Panc1 (cell line): ENCODE measurements at regions of chr1 and their contacts with region 1.

Region 1: DNA sequence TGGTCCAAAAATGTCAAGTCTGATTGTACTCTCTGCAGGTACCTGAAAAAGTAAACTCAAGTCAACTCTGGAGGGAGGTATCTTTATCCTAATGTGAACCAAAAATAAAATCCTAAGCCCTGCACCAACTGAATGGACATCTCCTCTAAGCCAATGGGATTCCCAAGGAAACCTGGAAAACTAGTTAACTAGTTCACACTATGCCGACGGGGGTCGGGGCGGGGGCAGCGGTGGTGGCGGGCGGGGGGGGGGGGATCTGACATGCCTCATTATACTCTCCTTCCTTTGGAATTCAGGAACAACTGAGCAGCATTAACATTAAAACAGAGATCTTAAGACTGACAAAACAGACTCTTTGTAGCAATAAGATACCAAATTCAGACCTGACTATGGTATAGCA is 452.6 kb upstream of the CAMK1G start:
- DNase-seq: no peak
- ATAC-seq: no peak
- H3K4me3 ChIP-seq: no peak overlapping the region
- H3K27ac ChIP-seq: no peak overlapping the region
- H3K4me1 ChIP-seq: no peaks in the 10 kb centered on the region
- H3K27me3 ChIP-seq: no peaks in the 10 kb centered on the region
- CTCF ChIP-seq: no peak

Region 2: DNA sequence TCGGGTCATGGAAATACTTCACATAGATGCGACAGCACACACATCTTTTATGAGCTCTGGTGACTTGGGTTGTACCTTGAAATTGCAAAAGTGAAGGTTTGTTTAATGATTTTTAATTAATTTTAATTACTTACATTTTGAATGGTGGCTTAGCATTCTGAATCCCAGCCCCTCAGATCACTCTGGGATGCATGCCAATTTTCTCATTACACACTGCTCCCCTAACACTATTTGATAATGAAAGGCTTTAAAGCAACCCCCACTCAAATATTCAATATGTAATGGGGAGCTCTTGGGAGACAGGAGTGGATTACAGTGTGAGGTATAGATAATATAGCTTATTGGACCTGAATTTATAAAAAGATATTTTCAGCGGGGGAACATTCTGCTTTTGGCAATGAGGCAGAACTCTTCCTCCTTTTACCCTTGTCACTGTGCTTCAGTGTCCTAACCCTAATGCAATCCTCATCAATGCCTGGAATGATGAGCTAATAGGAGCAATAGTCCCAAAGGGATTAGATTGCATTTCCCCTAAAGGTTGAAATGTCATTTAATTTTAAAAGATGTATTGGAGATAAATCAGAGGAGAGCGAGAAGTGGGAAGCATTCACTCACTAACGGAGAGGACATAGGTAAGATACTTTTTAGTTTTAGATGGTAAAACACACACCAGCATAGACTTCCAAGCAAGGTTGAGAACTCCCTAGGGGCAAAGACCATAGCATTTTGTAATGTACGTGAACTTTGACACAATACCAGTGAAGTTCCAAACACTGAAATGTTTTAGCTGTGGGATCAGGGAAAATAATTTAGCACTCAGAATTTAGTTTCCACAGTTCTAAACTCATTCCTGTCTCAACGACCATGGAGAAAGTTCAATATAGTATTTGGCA is 502.6 kb before region 1 on chr1:
- CTCF ChIA-PET with region 1: no interaction called
- POLR2A ChIA-PET with region 1: no interaction called
- in situ Hi-C with region 1: no loop called
- intact Hi-C with region 1: no loop called
- DNase-seq: no peak
- ATAC-seq: no peak
- H3K4me3 ChIP-seq: no peak overlapping the region
- H3K27ac ChIP-seq: no peak overlapping the region
- H3K4me1 ChIP-seq: no peaks in the 10 kb centered on the region
- H3K27me3 ChIP-seq: no peaks in the 10 kb centered on the region
- CTCF ChIP-seq: no peak

Region 3: DNA sequence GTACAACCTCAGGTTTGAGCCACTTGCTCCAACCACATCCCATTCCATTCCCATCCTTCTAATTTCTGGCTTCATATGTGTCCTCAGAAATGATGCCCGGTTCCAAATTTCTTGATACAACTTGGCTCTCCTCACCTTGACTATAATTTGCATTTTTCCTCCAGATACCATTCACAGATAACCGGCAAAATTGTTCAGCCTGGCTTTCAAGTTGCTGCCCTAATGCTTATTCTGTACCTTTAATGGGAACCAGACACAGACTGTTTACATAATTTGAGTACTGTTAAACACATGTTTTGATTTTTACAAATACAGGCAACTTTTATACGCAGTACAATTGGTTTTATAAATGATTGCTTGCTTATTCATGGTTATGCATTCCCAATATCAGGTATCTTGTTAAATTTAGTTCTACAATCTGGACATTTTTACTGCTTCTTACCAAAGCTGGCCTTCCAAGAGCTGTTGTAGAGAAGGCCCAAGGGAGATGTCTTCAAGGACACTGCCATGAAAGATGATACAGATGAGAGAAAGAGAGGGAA is 196.8 kb before region 1 on chr1:
- CTCF ChIA-PET with region 1: no interaction called
- POLR2A ChIA-PET with region 1: no interaction called
- in situ Hi-C with region 1: no loop called
- intact Hi-C with region 1: loop called (anchors 1 kb)
- DNase-seq: no peak
- ATAC-seq: no peak
- H3K4me3 ChIP-seq: no peak overlapping the region
- H3K27ac ChIP-seq: no peak overlapping the region
- H3K4me1 ChIP-seq: no peaks in the 10 kb centered on the region
- H3K27me3 ChIP-seq: no peaks in the 10 kb centered on the region
- CTCF ChIP-seq: no peak

Region 4: GRCh38 chr1:209106237-209106741 is 24.6 kb before region 1 on chr1:
- CTCF ChIA-PET with region 1: no interaction called
- POLR2A ChIA-PET with region 1: no interaction called
- in situ Hi-C with region 1: no loop called
- intact Hi-C with region 1: no loop called
- DNase-seq: no peak
- ATAC-seq: no peak
- H3K4me3 ChIP-seq: no peak overlapping the region
- H3K27ac ChIP-seq: no peak overlapping the region
- H3K4me1 ChIP-seq: no peaks in the 10 kb centered on the region
- H3K27me3 ChIP-seq: no peaks in the 10 kb centered on the region
- CTCF ChIP-seq: no peak